Activated CD8-positive, alpha-beta T cell treated with anti-CD3 and anti-CD28 coated beads, Interleukin-2, amount 10 ng/mL, durations not matched to agents 7 days and 5 days (primary cell): ENCODE measurements at regions of chrX and their contacts with region 1.

Region 1: GRCh38 chrX:154918060-154918483 is 31.9 kb downstream of the F8A1 start:
- DNase-seq: peak; percentile 35
- ATAC-seq: peak; percentile 58
- H3K4me3 Mint-ChIP-seq: peak overlapping the region; percentile 60
- H3K27ac Mint-ChIP-seq: no peak overlapping the region
- H3K4me1 Mint-ChIP-seq: no peaks in the 10 kb centered on the region
- H3K27me3 Mint-ChIP-seq: peaks cover 18% of the 10 kb centered on the region

Region 2: DNA sequence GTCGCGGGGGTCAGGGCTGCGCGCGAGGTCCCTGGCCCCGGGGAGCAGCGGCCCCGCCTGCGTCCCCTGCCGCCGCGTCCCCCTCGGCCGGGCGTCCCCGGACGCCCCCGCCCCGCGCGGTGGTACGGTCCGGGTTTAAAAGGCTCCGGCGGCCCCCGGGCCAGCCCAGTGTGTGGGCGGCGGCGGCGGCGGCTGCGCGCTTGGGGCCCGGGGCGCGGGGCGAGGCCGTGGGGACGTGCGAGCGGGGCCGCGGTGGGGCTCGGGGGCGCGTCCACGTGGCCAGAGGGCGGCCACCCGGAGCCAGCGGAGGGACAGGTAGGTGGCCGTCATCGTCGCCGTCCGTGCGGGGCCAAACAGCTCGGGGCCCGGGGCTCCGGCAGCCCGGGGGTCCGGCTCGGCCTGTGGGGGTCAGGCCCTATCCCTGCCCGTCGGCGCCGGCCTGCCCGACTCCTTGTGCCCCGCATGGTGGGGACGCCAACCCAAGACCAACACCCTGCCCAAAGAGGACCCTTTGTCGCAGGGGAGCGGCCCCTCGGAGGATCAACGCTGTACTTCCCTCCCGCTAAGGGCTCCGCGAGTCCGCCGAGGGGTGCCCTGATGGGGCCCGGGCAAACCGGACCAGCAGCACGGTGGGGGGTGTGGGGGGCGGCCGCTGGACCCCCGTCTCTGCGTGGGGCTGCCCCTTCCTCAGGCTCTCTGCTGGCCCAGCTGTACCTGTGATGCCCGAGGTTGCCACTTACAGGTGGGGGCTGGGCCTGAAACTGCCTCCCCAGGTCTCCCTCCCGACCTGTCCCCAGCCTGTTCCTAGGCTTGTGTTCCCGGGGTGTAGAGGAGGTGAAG is 459.7 kb before region 1 on chrX and contains the start of gene PLXNA3:
- CTCF ChIA-PET with region 1: no interaction called
- POLR2A ChIA-PET with region 1: no interaction called
- DNase-seq: peak; percentile 62
- ATAC-seq: peak; percentile 73
- H3K4me3 Mint-ChIP-seq: peak within 1 kb of the TSS; percentile 91
- H3K27ac Mint-ChIP-seq: peak within 1 kb of the TSS; percentile 96
- H3K4me1 Mint-ChIP-seq: peaks cover 18% of the 10 kb centered on the region
- H3K27me3 Mint-ChIP-seq: no peaks in the 10 kb centered on the region
- total RNA-seq, gene PLXNA3: 48.9 to 53.6 TPM

Region 3: DNA sequence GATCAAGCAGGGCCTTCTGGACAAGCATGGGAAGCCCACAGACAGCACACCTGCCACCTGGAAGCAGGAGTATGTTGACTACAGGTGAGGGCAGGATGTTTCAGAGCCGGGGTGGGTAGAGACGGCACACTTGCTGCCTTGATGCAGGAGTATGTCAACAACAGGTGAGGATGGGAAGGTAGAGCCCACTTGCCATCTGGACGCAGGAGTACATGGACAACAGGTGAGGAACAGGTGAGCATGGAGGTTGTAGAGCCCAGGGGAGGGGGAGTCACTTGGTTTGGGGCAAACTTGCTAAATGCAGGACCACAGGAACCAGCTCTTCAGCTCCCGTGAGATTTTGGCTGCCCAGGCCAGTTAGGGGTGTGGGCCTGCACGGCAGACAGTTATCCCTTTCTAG is 143.4 kb before region 1 on chrX:
- CTCF ChIA-PET with region 1: no interaction called
- POLR2A ChIA-PET with region 1: no interaction called
- DNase-seq: no peak
- ATAC-seq: no peak
- H3K4me3 Mint-ChIP-seq: no peak overlapping the region
- H3K27ac Mint-ChIP-seq: no peak overlapping the region
- H3K4me1 Mint-ChIP-seq: peaks cover 24% of the 10 kb centered on the region
- H3K27me3 Mint-ChIP-seq: no peaks in the 10 kb centered on the region

Region 4: GRCh38 chrX:154980330-154981096 is 62.4 kb after region 1 on chrX:
- CTCF ChIA-PET with region 1: interaction called, 17 read pairs
- POLR2A ChIA-PET with region 1: no interaction called
- DNase-seq: peak; percentile 85
- ATAC-seq: peak; percentile 98
- H3K4me3 Mint-ChIP-seq: peak overlapping the region; percentile 79
- H3K27ac Mint-ChIP-seq: peak overlapping the region; percentile 90
- H3K4me1 Mint-ChIP-seq: peaks cover 22% of the 10 kb centered on the region
- H3K27me3 Mint-ChIP-seq: no peaks in the 10 kb centered on the region

Region 5: DNA sequence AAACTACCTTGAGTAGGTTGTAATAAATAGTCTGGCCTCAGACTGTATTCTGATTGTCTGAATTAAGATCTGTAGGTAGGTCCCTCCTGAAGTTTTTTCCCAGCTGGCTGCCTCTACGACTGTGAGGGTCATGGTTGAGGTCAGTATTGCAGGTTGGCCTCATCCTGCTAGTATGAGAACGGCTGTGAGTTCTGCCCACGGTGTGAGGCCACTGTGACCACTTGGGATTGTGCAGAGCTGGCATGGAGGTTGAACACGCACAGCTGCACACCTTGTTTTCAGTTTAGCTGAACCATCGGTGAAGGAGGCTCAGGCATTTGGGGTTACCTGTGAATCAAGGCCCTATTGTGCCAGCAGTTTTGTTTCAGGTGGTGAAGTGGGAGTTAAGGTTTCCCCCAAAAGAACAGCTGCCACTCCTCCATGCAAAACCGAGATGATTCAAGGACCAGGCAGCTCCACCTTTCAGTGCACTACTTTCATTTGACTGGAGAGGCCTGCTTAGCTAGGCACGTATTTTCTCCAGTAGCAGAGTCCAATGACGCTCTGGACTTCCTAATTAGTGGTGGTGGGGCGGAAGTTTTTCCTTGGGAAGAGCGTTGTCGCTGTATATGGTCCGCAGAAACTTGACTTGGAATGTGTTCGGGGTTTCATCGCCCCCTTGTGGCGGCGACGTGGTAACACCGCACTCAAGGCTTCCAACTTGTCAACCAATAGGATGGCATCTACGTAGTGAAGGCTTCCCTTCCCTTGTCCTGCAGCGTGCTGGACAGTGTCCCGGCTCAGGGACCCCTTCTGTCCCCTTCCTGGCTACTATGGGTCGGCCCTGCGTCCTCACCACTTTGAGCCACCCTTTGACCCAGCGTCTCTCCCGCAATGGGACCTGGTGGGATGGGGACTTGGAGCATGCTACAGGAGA is 139.1 kb after region 1 on chrX:
- CTCF ChIA-PET with region 1: interaction called, 16 read pairs
- POLR2A ChIA-PET with region 1: interaction called, 7 read pairs
- DNase-seq: peak; percentile 62
- ATAC-seq: peak; percentile 82
- H3K4me3 Mint-ChIP-seq: peak overlapping the region; percentile 60
- H3K27ac Mint-ChIP-seq: peak overlapping the region; percentile 77
- H3K4me1 Mint-ChIP-seq: peaks cover 36% of the 10 kb centered on the region
- H3K27me3 Mint-ChIP-seq: no peaks in the 10 kb centered on the region

Region 6: GRCh38 chrX:155094468-155095061 is 176.5 kb after region 1 on chrX:
- CTCF ChIA-PET with region 1: interaction called, 16 read pairs
- POLR2A ChIA-PET with region 1: no interaction called
- DNase-seq: peak; percentile 39
- ATAC-seq: peak; percentile 53
- H3K4me3 Mint-ChIP-seq: no peak overlapping the region
- H3K27ac Mint-ChIP-seq: no peak overlapping the region
- H3K4me1 Mint-ChIP-seq: no peaks in the 10 kb centered on the region
- H3K27me3 Mint-ChIP-seq: no peaks in the 10 kb centered on the region

Region 7: GRCh38 chrX:155216179-155216939 is 298.3 kb after region 1 on chrX and contains the start of gene VBP1:
- CTCF ChIA-PET with region 1: interaction called, 12 read pairs
- POLR2A ChIA-PET with region 1: no interaction called
- DNase-seq: peak; percentile 92
- ATAC-seq: peak; percentile 100
- H3K4me3 Mint-ChIP-seq: peak within 1 kb of the TSS; percentile 95
- H3K27ac Mint-ChIP-seq: peak within 1 kb of the TSS; percentile 90
- H3K4me1 Mint-ChIP-seq: peaks cover 18% of the 10 kb centered on the region
- H3K27me3 Mint-ChIP-seq: no peaks in the 10 kb centered on the region
- total RNA-seq, gene VBP1: 64.2 to 65.1 TPM